RWPE1 (cell line): ENCODE measurements at regions of chr4 and their contacts with region 1.

Region 1: DNA sequence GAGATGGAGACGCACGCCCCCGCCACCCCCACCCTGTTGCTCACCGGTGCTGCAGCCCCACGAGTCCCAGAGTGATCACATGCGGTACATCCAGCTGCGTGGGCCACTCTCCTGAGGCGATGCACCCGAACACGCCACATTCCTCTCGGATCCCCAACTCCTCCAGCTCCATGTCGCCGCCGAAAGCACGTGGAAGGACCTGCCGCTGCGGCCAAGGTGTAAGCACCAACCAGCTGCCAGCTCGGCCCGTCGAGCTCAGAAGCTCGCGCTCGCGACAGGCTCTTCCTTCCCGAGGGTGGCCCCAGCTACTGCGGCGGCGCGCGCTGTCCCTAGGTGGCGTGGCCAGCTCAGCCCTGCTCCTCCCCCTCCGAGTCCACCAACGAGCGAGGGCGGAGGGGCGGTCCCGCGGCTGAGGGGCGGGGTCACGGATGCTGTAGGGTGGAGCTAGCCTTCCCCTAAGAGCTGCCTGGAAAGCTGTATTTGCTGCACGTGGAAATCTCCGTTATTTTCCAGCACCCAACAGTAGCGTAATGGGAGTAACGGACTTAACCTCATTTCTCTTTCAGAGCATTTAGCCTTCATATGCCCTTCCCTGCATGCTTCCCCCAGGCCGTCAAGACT is at the start of gene PPAT:
- DNase-seq: peak; percentile 97
- H3K27ac ChIP-seq: peak within 1 kb of the TSS; percentile 95
- CTCF ChIP-seq: 0 out of 2 replicates have a peak, but pooled peaks have one; percentile 8

Region 2: GRCh38 chr4:56129431-56129861 is 306.0 kb before region 1 on chr4:
- CTCF ChIA-PET with region 1: no interaction called
- POLR2A ChIA-PET with region 1: no interaction called
- DNase-seq: peak; percentile 26
- H3K27ac ChIP-seq: no peak overlapping the region
- CTCF ChIP-seq: peak; percentile 22

Region 3: GRCh38 chr4:56467284-56468096 is 32.1 kb after region 1 on chr4 and contains the start of gene SRP72:
- CTCF ChIA-PET with region 1: no interaction called
- POLR2A ChIA-PET with region 1: interaction called, 13 read pairs
- DNase-seq: peak; percentile 88
- H3K27ac ChIP-seq: peak within 1 kb of the TSS; percentile 91
- CTCF ChIP-seq: no peak

Region 4: DNA sequence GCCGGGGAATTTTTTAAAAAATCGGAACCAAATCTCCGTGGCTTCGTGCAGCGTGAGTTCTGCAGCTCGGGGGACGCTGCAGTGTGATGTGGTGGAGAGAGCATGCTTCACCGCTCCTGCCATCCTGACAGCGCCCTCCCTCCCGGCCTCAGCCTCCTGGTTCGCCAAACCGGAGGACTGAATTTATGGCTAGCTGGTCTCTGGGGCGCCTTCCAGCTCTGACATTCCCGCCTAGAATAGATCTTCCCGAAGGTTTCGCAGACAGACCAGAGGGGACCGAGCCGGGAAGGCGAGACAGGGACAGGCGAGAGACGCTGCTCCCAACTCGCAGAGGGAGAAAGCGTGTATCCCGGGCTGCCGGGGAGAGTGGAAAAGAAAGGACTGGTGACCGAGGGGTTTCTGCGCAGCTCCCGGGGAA is 219.8 kb after region 1 on chr4:
- CTCF ChIA-PET with region 1: no interaction called
- POLR2A ChIA-PET with region 1: no interaction called
- DNase-seq: peak; percentile 20
- H3K27ac ChIP-seq: peak overlapping the region; percentile 76
- CTCF ChIP-seq: no peak

Region 5: GRCh38 chr4:56723201-56723605 is 287.8 kb after region 1 on chr4:
- CTCF ChIA-PET with region 1: no interaction called
- POLR2A ChIA-PET with region 1: no interaction called
- DNase-seq: no peak
- H3K27ac ChIP-seq: no peak overlapping the region
- CTCF ChIP-seq: no peak

Region 6: DNA sequence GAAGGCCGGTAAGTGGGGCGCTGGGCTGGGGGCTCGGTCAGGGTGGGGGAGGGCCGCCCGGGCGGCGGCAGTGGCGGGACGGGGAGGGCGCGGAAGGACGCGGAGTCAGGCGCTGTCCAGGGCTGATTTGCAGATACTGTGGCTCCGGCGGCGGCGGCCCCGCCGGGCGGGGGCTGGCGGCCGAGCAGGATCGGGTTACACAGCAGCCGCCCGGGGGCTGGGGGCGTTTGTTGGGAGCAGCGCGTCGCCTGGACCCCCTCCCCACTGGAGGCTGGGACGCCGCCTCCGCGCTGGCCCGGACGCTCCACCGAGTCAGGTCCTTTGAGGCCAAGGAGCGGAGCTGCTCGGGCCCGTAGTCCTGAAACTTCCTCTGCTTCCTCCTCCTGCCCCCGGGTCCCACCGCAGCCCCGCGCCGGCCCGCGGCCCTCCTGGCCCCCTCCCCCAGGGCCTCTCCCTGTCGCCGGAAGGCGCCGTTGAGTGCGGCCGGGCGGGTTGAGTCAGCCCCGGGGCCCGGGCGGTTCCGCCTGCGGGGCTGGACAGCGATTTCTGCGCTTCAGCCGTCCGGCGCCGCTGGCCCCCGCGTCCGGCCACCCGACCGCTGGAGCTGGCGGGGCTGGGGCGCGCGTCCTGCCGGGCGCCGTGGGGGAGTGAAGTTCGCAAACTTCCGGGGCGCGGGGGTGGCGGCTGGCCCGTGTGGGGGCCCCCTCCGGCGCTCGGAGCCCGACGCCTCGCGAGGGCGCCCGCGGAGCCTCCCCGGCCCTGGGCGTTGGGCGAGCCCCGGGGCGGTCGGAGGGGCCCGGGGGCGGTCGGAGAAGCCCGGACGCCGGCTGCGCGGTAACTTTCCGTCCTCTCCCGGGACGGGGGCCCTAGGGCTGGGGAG is 473.0 kb after region 1 on chr4:
- CTCF ChIA-PET with region 1: interaction called, 10 read pairs
- POLR2A ChIA-PET with region 1: no interaction called
- DNase-seq: peak; percentile 78
- H3K27ac ChIP-seq: peak overlapping the region; percentile 93
- CTCF ChIP-seq: peak; percentile 40